Transverse colon (tissue), 4 donors: ENCODE measurements at regions of chr5 and their contacts with region 1.

Region 1: DNA sequence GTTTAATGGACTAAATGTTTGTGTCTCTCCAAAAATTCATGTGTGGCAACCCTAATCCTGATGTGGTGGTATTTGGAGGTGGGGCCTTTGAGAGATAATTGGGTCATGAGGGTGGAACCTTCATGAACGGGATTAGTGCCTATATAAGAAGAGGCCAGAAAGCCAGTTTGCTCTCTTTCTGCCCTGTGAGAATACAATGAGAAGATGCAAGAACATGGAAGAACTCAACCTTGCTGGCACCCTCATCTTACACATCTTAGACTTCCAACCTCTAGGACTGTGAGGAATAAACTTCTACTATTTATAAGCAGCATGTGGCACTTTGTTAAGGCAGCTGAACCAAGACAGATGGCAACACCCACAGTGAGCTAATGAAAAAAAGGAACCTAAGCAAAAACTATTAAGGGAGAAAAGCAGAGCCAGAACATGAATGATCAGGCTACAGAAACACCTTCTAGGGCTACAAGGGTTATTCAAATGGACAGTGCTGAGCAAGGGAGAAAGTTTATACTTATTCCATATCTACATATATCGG is 159.5 kb downstream of the PLK2 start:
- DNase-seq: no peak
- H3K4me3 ChIP-seq: no peak overlapping the region
- H3K27ac ChIP-seq: no peak overlapping the region
- H3K4me1 ChIP-seq: no peaks in the 10 kb centered on the region
- H3K27me3 ChIP-seq: no peaks in the 10 kb centered on the region
- CTCF ChIP-seq: no peak
- EP300 ChIP-seq: no peak
- POLR2A ChIP-seq: no peak

Region 2: GRCh38 chr5:56807679-56808078 is 1492.7 kb before region 1 on chr5:
- in situ Hi-C with region 1: no loop called
- intact Hi-C with region 1: loop called (anchors 5 kb)
- DNase-seq: no peak
- H3K4me3 ChIP-seq: no peak overlapping the region
- H3K27ac ChIP-seq: no peak overlapping the region
- H3K4me1 ChIP-seq: peaks cover 0 to 3% (median 0%) of the 10 kb centered on the region in 4 donors
- H3K27me3 ChIP-seq: no peaks in the 10 kb centered on the region
- CTCF ChIP-seq: no peak
- EP300 ChIP-seq: no peak
- POLR2A ChIP-seq: no peak